HCT116 (cell line): ENCODE measurements at regions of chr2 and their contacts with region 1.

Region 1: GRCh38 chr2:127064642-127065250 is 42.2 kb downstream of the BIN1 start:
- DNase-seq: peak; percentile 87
- ATAC-seq: peak; percentile 86
- H3K4me3 ChIP-seq: peak overlapping the region; percentile 16 to 54
- H3K27ac ChIP-seq: peak overlapping the region; percentile 92
- H3K4me1 ChIP-seq: peaks cover 31 to 57% of the 10 kb centered on the region in 2 experiments
- H3K27me3 ChIP-seq: no peaks in the 10 kb centered on the region
- CTCF ChIP-seq: no peak
- POLR2A ChIP-seq: no peak
- RAD21 ChIP-seq: no peak

Region 2: GRCh38 chr2:127081826-127082633 is 17.3 kb after region 1 on chr2:
- CTCF ChIA-PET with region 1: interaction called, 13 read pairs
- POLR2A ChIA-PET with region 1: no interaction called
- RAD21 ChIA-PET with region 1: no interaction called
- intact Hi-C with region 1: no loop called
- DNase-seq: no peak
- ATAC-seq: no peak
- H3K4me3 ChIP-seq: no peak overlapping the region
- H3K27ac ChIP-seq: peak overlapping the region; percentile 25; the same call in 1 of the 2 replicates
- H3K4me1 ChIP-seq: peaks cover 16 to 69% of the 10 kb centered on the region in 2 experiments; a peak in 3 of 4 replicates
- H3K27me3 ChIP-seq: no peaks in the 10 kb centered on the region
- CTCF ChIP-seq: no peak
- POLR2A ChIP-seq: no peak
- RAD21 ChIP-seq: no peak

Region 3: DNA sequence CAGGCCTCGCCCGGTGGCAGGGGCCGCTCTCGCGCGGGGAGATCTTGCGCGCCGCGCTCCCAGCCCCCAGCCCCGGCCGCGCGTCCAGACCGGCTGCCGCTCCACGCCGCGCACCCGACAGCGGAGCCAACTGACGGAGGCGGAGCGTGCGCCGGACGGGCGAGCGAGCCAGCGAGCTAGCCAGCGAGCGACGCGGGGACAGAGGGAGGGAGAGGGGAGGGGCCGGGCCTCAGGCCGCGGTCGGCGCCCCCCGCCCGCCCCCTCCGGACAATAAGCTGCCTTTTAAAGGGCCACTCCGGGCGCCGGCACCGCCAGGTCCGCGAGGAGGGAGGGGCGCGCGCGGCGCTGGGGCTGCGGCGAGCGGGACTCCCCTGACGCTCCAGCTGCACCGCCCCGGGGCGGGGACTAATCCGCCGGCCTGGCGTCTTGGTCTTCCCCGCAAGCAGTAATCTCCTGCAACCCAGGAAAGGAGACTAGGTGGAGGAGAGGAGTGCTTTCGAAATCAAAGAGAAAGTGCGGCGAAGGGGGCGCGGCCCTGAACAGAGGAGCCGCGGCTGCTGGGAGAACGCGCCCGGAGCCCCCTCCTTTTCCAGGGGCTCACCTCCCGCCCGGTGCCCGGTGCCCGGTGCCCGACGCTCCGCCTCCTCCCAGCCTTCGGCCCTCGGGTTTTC is 42.3 kb after region 1 on chr2 and contains the start of gene BIN1:
- CTCF ChIA-PET with region 1: interaction called, 5 read pairs
- POLR2A ChIA-PET with region 1: interaction called, 3 read pairs
- RAD21 ChIA-PET with region 1: interaction called, 3 to 5 read pairs
- intact Hi-C with region 1: loop called (anchors 2 kb)
- DNase-seq: peak; percentile 65
- ATAC-seq: peak; percentile 88
- H3K4me3 ChIP-seq: peak within 1 kb of the TSS; percentile 75 to 78
- H3K27ac ChIP-seq: peak within 1 kb of the TSS; percentile 56
- H3K4me1 ChIP-seq: peaks cover 6 to 24% of the 10 kb centered on the region in 2 experiments
- H3K27me3 ChIP-seq: no peaks in the 10 kb centered on the region
- CTCF ChIP-seq: no peak
- POLR2A ChIP-seq: no peak
- RAD21 ChIP-seq: no peak
- total RNA-seq, gene BIN1: 31.8 TPM

Region 4: DNA sequence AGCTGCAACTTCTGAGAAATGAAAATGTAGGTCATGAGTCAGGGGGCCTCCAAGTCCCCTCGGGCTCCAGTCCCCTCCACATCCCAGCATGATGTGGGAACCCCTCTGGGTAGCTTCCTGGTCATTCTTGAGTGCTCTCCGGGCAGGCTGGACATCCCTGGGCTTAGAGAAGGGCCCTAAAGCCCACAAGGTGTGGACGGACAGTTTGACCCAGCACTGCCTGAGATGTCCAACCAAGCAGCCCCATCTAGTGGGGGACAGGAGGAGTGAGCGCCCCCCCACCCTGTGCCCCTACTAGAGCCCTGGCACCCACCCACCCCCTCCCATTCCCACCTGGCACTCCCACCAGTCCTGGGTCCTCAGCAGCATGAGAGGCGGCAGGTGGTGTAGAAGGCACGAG is 109.4 kb after region 1 on chr2:
- CTCF ChIA-PET with region 1: interaction called, 11 read pairs
- POLR2A ChIA-PET with region 1: no interaction called
- RAD21 ChIA-PET with region 1: no interaction called
- intact Hi-C with region 1: loop called (anchors 2 kb)
- DNase-seq: no peak
- ATAC-seq: peak; percentile 88
- H3K4me3 ChIP-seq: no peak overlapping the region
- H3K27ac ChIP-seq: no peak overlapping the region
- H3K4me1 ChIP-seq: no peaks in the 10 kb centered on the region; a peak in 1 of 4 replicates
- H3K27me3 ChIP-seq: no peaks in the 10 kb centered on the region
- CTCF ChIP-seq: peak; percentile 24 to 33 (median 31); a peak in 2 of 6 replicates
- POLR2A ChIP-seq: no peak
- RAD21 ChIP-seq: peak; percentile 73

Region 5: DNA sequence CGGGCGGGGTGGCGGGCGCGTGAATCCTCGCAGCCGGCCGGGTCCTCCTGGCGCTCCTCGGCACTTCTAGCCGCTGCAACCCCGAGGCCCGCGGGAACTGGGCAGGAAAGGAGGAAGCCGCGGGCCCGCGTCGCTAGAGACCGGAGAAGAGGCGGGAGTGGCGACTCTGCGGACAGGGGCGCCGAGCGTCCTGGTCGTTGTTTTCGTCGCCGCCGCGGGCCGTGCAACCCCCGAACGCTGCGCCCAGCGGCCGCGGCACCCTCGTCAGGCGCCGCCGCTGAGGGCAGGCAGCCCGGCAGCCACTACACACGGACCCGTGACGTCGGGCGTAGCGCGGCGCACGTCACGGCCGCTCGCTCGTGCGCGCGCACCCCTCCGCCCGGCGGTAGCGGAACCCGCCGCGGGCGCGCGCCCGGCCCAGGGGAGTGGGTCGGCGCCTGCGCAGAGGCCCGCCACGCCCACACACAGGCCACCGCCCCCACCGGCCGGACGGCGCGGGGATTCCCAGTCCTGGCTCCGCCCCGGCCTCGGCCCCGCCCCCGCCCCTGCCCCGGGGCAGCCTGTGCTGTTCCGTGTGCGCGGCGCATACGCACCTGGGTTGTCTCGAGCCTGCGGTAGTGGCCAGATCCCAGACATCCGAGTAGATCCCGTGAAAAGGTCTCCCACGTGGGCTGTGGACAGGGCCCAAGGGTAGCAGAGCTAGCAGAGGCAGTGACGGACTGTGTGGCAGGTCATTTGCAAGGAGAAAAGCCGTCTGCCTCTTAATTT is 323.1 kb after region 1 on chr2 and contains the start of gene MAP3K2:
- CTCF ChIA-PET with region 1: no interaction called
- POLR2A ChIA-PET with region 1: no interaction called
- RAD21 ChIA-PET with region 1: no interaction called
- intact Hi-C with region 1: loop called (anchors 5 kb)
- DNase-seq: peak; percentile 72
- ATAC-seq: peak; percentile 87
- H3K4me3 ChIP-seq: peak within 1 kb of the TSS; percentile 55 to 64
- H3K27ac ChIP-seq: peak within 1 kb of the TSS; percentile 97
- H3K4me1 ChIP-seq: peaks cover 14 to 22% of the 10 kb centered on the region in 2 experiments
- H3K27me3 ChIP-seq: no peaks in the 10 kb centered on the region
- CTCF ChIP-seq: no peak
- POLR2A ChIP-seq: peak; percentile 49
- RAD21 ChIP-seq: no peak
- total RNA-seq, gene MAP3K2: 44.5 TPM